ENCODE measurements at regions of chr7 and their contacts with region 1.

Region 1: DNA sequence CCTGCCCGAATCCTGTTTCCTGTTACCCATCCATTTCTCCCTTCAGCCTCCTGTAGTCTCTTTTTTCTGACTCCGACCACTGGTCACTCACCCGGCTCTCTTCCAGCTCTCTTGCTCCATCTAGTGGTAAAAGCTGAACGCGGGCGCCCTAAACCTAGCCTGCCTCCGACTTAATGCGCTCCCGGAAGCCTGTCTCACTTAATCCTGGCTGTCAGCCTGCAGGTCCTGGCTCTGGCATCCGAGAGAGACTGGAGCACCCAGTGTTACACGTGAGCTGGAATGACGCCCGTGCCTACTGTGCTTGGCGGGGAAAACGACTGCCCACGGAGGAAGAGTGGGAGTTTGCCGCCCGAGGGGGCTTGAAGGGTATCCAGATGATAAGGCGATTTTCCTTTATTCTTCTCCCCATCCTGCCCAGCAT is 10.3 kb downstream of the SUMF2 start:
- DNase-seq: peak; percentile 90
- H3K4me3 ChIP-seq: no peak overlapping the region
- H3K27ac ChIP-seq: no peak overlapping the region
- H3K4me1 ChIP-seq: no peaks in the 10 kb centered on the region
- H3K27me3 ChIP-seq: no peaks in the 10 kb centered on the region
- CTCF ChIP-seq: peak; percentile 96

Region 2: GRCh38 chr7:55593515-55594318 is 480.7 kb before region 1 on chr7:
- CTCF ChIA-PET with region 1: no interaction called
- POLR2A ChIA-PET with region 1: no interaction called
- intact Hi-C with region 1: loop called (anchors 5 kb)
- DNase-seq: peak; percentile 80
- H3K4me3 ChIP-seq: no peak overlapping the region
- H3K27ac ChIP-seq: no peak overlapping the region
- H3K4me1 ChIP-seq: no peaks in the 10 kb centered on the region
- H3K27me3 ChIP-seq: no peaks in the 10 kb centered on the region
- CTCF ChIP-seq: peak; percentile 92

Region 3: DNA sequence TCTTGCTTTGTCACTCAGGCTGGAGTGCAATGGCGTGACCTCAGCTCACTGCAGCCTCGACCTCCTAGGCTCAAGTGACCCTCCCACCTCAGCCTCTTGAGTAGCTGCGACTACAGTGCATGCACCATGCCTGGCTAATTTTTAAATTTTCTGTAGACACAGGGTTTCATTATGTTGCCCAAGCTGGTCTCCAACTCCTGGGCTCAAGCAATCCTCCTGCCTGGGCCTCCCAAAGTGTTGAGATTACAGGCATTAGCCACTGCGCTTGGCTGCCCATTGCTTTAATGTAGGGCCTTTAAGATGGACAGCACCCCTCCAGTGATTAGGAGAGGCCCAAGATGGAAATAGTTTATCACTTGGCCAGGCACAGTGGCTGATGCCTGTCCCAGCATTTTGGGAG is 70.6 kb before region 1 on chr7:
- CTCF ChIA-PET with region 1: interaction called, 3 read pairs
- POLR2A ChIA-PET with region 1: no interaction called
- intact Hi-C with region 1: loop called (anchors 1 kb)
- DNase-seq: no peak
- H3K4me3 ChIP-seq: no peak overlapping the region
- H3K27ac ChIP-seq: no peak overlapping the region
- H3K4me1 ChIP-seq: no peaks in the 10 kb centered on the region
- H3K27me3 ChIP-seq: no peaks in the 10 kb centered on the region
- CTCF ChIP-seq: no peak

Region 4: GRCh38 chr7:56046721-56047445 is 27.5 kb before region 1 on chr7:
- CTCF ChIA-PET with region 1: no interaction called
- POLR2A ChIA-PET with region 1: no interaction called
- intact Hi-C with region 1: no loop called
- DNase-seq: no peak
- H3K4me3 ChIP-seq: no peak overlapping the region
- H3K27ac ChIP-seq: no peak overlapping the region
- H3K4me1 ChIP-seq: peaks cover 5% of the 10 kb centered on the region
- H3K27me3 ChIP-seq: no peaks in the 10 kb centered on the region
- CTCF ChIP-seq: no peak